ENCODE measurements at regions of chr2 and their contacts with region 1.

Region 1: GRCh38 chr2:237572021-237572741 is 5.8 kb downstream of the PRLH start:
- DNase-seq: peak; percentile 92 to 96 (median 94)
- H3K4me3 ChIP-seq: no peak overlapping the region
- H3K27ac ChIP-seq: no peak overlapping the region
- H3K4me1 ChIP-seq: peaks cover 0 to 7% (median 0%) of the 10 kb centered on the region in 4 experiments
- H3K27me3 ChIP-seq: no peaks in the 10 kb centered on the region

Region 2: GRCh38 chr2:237154082-237154638 is 418.0 kb before region 1 on chr2:
- CTCF ChIA-PET with region 1: interaction called, 24 read pairs
- POLR2A ChIA-PET with region 1: no interaction called
- DNase-seq: peak; percentile 69 to 82 (median 79)
- H3K4me3 ChIP-seq: no peak overlapping the region
- H3K27ac ChIP-seq: no peak overlapping the region
- H3K4me1 ChIP-seq: peaks cover 6 to 14% (median 9%) of the 10 kb centered on the region in 4 experiments
- H3K27me3 ChIP-seq: peaks cover 0 to 24% (median 6%) of the 10 kb centered on the region in 5 experiments

Region 3: DNA sequence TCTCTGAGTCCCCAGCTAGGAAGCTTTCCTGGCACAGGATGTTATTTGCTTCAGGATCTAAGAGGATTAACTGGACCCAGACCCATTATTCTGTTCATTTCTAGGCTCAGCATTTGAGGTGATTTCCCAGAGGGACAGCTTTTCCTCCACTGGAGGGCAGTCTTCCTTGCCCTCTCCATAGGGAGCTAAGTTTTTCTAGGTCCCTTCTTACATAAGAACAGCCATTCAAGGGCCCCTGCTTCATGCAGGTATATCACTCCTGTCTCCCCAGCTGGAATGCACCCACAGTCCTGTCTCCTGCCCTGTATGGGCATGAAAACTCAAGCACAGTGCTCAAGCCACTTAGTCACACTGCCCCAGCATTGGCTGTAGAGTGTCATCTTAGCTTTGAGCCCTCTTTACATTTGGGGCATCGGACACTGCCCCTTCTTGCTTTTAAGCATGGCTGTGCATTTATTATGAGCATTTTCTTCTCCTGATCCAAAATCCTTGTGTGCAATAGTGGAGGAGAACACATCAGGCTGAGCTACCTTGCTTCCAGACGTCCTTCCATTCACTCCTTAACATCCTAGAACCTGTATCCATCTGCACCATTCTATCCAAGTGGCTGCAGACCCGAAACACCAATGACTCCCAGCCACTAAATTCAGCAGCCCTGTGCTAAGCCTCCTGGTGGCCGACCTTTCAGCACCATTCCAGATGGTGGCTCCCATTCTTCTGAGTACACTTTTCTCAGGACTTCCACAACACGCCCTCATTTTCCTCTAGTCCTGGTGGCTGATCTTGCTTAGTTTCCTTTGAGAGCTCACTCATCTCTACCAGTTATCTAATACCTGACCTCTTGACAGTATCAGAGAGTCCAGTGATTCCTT is 406.5 kb before region 1 on chr2:
- CTCF ChIA-PET with region 1: interaction called, 12 read pairs
- POLR2A ChIA-PET with region 1: no interaction called
- DNase-seq: peak in 2 of 3 donors; percentile 25 to 35
- H3K4me3 ChIP-seq: no peak overlapping the region
- H3K27ac ChIP-seq: no peak overlapping the region
- H3K4me1 ChIP-seq: no peaks in the 10 kb centered on the region
- H3K27me3 ChIP-seq: peaks cover 0 to 3% (median 0%) of the 10 kb centered on the region in 5 experiments

Region 4: DNA sequence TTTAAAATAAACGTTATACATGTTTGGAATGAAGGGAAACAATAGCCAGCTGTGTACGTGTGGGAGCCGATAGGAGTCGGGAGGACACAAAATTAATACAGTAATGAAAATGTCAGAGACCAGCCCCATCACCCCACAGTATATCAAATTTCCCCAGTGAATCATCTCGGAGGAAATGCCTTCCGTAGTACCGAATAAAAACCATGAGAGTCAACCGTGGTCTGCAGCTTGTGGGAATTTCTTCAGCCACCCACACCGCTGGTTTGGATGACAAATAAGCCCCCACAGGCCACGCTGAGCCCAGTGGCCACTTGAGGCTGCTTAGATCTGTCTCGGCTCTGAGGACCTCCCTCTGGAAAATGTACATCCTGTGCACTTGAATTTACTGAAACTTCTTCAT is 292.0 kb before region 1 on chr2:
- CTCF ChIA-PET with region 1: no interaction called
- POLR2A ChIA-PET with region 1: no interaction called
- DNase-seq: no peak
- H3K4me3 ChIP-seq: no peak overlapping the region
- H3K27ac ChIP-seq: no peak overlapping the region
- H3K4me1 ChIP-seq: no peaks in the 10 kb centered on the region
- H3K27me3 ChIP-seq: peaks cover 0 to 4% (median 0%) of the 10 kb centered on the region in 5 experiments

Region 5: GRCh38 chr2:237421542-237422116 is 150.6 kb before region 1 on chr2:
- CTCF ChIA-PET with region 1: interaction called, 14 read pairs
- POLR2A ChIA-PET with region 1: no interaction called
- DNase-seq: peak; percentile 73 to 74 (median 74)
- H3K4me3 ChIP-seq: peak overlapping the region in 2 of 7 experiments; percentile 19 to 57
- H3K27ac ChIP-seq: no peak overlapping the region
- H3K4me1 ChIP-seq: peaks cover 0 to 8% (median 3%) of the 10 kb centered on the region in 4 experiments
- H3K27me3 ChIP-seq: peaks cover 0 to 9% (median 0%) of the 10 kb centered on the region in 5 experiments

Region 6: DNA sequence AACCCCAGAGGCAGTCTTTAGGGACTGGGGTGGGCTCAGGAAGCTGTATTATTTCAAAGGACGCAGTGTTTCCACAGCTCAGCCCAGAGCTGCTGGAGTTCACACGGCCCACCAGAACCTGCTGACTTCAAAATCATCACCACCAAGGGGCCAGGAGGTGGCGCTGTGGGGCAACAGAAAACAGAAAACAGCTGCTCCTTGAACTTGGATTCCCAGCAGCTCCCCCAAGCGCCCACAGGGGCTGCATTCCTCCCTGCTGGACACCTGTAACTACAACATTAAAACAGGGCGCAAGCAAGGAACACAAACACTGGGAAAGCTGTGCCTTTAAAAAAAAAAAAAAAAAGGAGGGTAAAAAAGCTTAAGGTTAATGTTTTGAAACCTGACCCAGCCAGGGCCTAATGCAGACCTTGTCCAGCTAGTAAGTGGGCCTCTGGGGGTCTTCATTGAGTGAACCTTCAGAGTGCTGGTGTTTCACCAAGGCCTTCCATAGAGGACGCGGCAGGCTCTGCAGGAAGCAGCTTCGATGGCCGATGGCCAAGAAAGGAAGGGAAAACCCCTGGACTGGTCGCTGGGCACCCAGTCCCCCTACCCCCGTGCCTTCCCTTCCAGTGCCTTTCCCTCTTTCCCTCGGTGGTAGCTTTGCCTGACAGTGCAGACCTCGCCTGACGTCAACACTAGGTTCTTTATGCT is 59.3 kb before region 1 on chr2:
- CTCF ChIA-PET with region 1: interaction called, 108 read pairs
- POLR2A ChIA-PET with region 1: interaction called, 3 read pairs
- DNase-seq: peak; percentile 89 to 94 (median 90)
- H3K4me3 ChIP-seq: no peak overlapping the region
- H3K27ac ChIP-seq: no peak overlapping the region
- H3K4me1 ChIP-seq: no peaks in the 10 kb centered on the region
- H3K27me3 ChIP-seq: peaks cover 0 to 2% (median 0%) of the 10 kb centered on the region in 5 experiments

Region 7: DNA sequence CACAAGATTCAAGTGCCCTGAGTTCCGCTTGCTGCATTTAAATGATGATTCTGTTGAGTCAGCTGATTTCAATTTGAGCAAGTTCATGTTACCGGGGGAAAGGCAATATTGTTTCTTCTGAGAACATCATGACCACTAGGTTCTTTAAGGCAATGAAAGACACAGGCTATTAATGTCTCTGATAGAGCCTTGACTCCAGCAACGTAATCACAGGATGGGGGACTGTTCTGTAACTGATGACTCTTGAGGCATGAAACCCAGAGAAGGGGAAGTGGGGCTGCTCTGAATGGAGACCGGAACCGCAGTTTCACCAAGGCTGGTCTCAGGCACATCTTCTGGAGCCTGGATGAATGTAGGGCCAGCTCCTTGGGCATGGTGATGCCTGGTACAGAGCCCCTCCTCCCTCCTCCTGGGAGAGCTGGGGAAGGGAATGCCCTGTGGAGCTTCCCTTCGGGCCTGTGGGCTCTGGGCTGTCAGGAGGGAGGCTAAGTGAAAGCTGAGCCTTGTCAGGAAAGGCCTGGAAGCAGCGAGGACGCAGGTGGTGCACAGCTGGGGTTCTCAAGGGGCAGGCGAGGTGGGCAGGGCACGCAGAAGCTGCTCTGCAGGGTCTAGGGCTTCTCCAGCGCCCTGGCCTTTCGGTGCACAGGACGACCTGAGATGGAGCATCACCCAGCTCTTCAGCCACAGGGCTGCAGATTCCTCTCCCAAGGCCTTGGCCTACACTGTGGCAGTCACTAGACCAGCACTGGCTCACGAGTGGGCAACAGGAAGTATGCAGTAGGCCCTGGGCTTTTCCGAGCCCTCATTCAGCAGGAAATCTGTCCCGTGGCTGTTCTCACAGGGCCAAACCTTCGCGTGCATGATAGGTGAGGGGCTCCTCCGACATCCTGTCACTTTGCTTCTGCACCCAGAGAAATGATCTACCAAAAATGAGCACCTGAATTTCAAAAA is 42.5 kb before region 1 on chr2:
- CTCF ChIA-PET with region 1: interaction called, 10 read pairs
- POLR2A ChIA-PET with region 1: no interaction called
- DNase-seq: peak in 2 of 3 donors; percentile 5 to 11
- H3K4me3 ChIP-seq: no peak overlapping the region
- H3K27ac ChIP-seq: no peak overlapping the region
- H3K4me1 ChIP-seq: peaks cover 0 to 12% (median under 1%) of the 10 kb centered on the region in 4 experiments
- H3K27me3 ChIP-seq: no peaks in the 10 kb centered on the region

Region 8: GRCh38 chr2:237593596-237594320 is 21.6 kb after region 1 on chr2:
- CTCF ChIA-PET with region 1: no interaction called
- POLR2A ChIA-PET with region 1: no interaction called
- DNase-seq: no peak
- H3K4me3 ChIP-seq: no peak overlapping the region
- H3K27ac ChIP-seq: no peak overlapping the region
- H3K4me1 ChIP-seq: peaks cover 2 to 23% (median 8%) of the 10 kb centered on the region in 4 experiments
- H3K27me3 ChIP-seq: no peaks in the 10 kb centered on the region

Region 9: GRCh38 chr2:237744613-237745249 is 172.6 kb after region 1 on chr2:
- CTCF ChIA-PET with region 1: interaction called, 11 read pairs
- POLR2A ChIA-PET with region 1: no interaction called
- DNase-seq: peak; percentile 60 to 72 (median 68)
- H3K4me3 ChIP-seq: no peak overlapping the region
- H3K27ac ChIP-seq: no peak overlapping the region
- H3K4me1 ChIP-seq: peaks cover 0 to 28% (median 9%) of the 10 kb centered on the region in 4 experiments
- H3K27me3 ChIP-seq: no peaks in the 10 kb centered on the region

Region 10: GRCh38 chr2:238003234-238004031 is 431.3 kb after region 1 on chr2:
- CTCF ChIA-PET with region 1: no interaction called
- POLR2A ChIA-PET with region 1: no interaction called
- DNase-seq: peak in 2 of 3 donors; percentile 10 to 21
- H3K4me3 ChIP-seq: no peak overlapping the region
- H3K27ac ChIP-seq: no peak overlapping the region
- H3K4me1 ChIP-seq: peaks cover 0 to 12% (median 9%) of the 10 kb centered on the region in 4 experiments
- H3K27me3 ChIP-seq: no peaks in the 10 kb centered on the region